ENCODE measurements at regions of chr19 and their contacts with region 1.

Region 1: GRCh38 chr19:38666663-38667511 is 19.4 kb downstream of the ACTN4 start:
- DNase-seq: peak in 1 of 2 donors; percentile 92
- H3K4me3 ChIP-seq: peak overlapping the region in 1 of 2 donors; percentile 25
- H3K27ac ChIP-seq: peak overlapping the region; percentile 92 to 96
- H3K4me1 ChIP-seq: peaks cover 59 to 96% of the 10 kb centered on the region in 2 donors
- H3K27me3 ChIP-seq: no peaks in the 10 kb centered on the region
- CTCF ChIP-seq: no peak

Region 2: GRCh38 chr19:38653028-38653571 is 13.8 kb before region 1 on chr19:
- intact Hi-C with region 1: loop called (anchors 2 kb)
- DNase-seq: no peak
- H3K4me3 ChIP-seq: peak overlapping the region; percentile 89 to 100
- H3K27ac ChIP-seq: peak overlapping the region; percentile 92 to 96
- H3K4me1 ChIP-seq: peaks cover 17 to 70% of the 10 kb centered on the region in 2 donors
- H3K27me3 ChIP-seq: no peaks in the 10 kb centered on the region
- CTCF ChIP-seq: no peak

Region 3: DNA sequence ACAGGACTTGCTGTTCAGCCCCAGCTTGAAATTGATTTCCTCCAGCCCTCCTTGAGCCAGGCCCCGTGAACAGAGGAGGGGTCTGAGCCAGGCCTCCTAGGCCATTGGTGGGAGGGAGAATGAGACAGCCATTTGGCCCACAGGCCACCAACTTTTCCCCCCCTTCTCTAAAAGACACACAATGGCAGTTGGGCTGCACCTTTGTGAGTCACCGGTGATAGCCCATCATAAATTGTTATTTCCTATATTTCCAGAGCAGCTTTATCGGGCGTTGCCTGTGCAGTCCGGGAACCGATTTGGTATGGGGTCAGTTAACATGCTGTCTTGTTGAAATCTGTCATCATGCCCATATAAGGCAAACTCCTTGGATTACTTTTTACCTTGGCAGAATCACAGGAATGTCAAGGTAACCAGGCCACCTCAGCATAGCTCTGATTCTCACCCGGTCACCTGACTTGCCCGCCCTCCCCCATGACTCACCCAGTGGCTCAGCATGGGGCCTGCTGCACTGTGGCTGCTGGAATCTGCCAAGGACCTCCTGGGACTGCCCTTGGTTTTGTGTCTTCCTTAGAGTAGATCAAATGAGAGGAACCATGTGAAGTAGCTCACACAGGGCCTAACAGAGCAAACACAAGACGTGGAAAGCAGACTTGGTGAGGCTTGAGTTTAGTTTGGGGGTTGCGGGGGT is 16.6 kb after region 1 on chr19:
- intact Hi-C with region 1: loop called (anchors 2 kb)
- DNase-seq: peak in 1 of 2 donors; percentile 92
- H3K4me3 ChIP-seq: peak overlapping the region in 1 of 2 donors; percentile 23
- H3K27ac ChIP-seq: peak overlapping the region; percentile 95 to 96
- H3K4me1 ChIP-seq: peaks cover 43 to 91% of the 10 kb centered on the region in 2 donors
- H3K27me3 ChIP-seq: no peaks in the 10 kb centered on the region
- CTCF ChIP-seq: no peak

Region 4: GRCh38 chr19:38693380-38694223 is 26.7 kb after region 1 on chr19:
- intact Hi-C with region 1: loop called (anchors 2 kb)
- DNase-seq: peak in 1 of 2 donors; percentile 84
- H3K4me3 ChIP-seq: peak overlapping the region in 1 of 2 donors; percentile 29
- H3K27ac ChIP-seq: peak overlapping the region; percentile 95 to 98
- H3K4me1 ChIP-seq: peaks cover 52 to 85% of the 10 kb centered on the region in 2 donors
- H3K27me3 ChIP-seq: no peaks in the 10 kb centered on the region
- CTCF ChIP-seq: no peak

Region 5: DNA sequence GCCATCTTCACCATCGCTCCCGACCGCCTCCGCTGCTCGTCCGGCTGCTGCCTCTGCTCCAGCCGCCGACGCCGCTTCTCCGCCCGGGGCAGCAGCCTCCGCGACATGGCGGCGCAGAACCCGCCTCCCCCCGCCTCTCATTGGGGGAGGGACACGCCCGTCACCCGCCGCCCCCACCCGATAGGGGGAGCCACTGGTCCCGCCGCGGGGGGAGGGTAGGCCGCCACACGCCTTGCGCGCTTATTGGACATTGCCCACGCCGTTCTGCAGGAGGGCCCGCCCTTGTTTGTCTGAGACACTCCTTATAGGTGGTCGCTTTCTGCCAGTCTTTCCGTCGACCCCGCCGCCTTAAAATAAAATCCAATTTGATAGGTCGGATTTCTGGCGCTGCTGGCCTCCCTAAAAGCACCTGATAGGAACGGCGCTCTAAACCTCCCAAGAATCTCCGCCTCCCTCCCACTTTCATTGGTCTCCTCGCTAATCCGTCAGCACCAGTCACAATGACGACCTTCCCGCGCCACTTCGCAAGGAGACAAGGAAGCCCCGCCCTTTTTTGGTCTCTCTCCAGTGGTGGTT is 183.1 kb after region 1 on chr19 and contains the start of gene HNRNPL:
- intact Hi-C with region 1: no loop called
- DNase-seq: peak in 1 of 2 donors; percentile 100
- H3K4me3 ChIP-seq: peak within 1 kb of the TSS; percentile 81 to 98
- H3K27ac ChIP-seq: peak within 1 kb of the TSS; percentile 98 to 100
- H3K4me1 ChIP-seq: peaks cover 16 to 41% of the 10 kb centered on the region in 2 donors
- H3K27me3 ChIP-seq: no peaks in the 10 kb centered on the region
- CTCF ChIP-seq: peak; percentile 2 to 34 (median 31)
- total RNA-seq, gene HNRNPL: 110 TPM

Measured in ascending aorta (tissue), 2 donors.